CD4-positive, alpha-beta memory T cell (primary cell): ENCODE measurements at regions of chr4 and their contacts with region 1.

Region 1: GRCh38 chr4:87006676-87007527 is 72.1 kb downstream of the AFF1 start:
- DNase-seq: peak; percentile 90 to 95 (median 91)
- H3K4me3 ChIP-seq: peak overlapping the region; percentile 82 to 86
- H3K4me3 Mint-ChIP-seq: peak overlapping the region; percentile 88 to 99 (median 94)
- H3K27ac ChIP-seq: peak overlapping the region; percentile 83
- H3K27ac Mint-ChIP-seq: peak overlapping the region; percentile 91 to 100 (median 97)
- H3K4me1 ChIP-seq: peaks cover 53% of the 10 kb centered on the region
- H3K4me1 Mint-ChIP-seq: peaks cover 47 to 58% (median 53%) of the 10 kb centered on the region in 4 donors
- H3K27me3 ChIP-seq: no peaks in the 10 kb centered on the region
- H3K27me3 Mint-ChIP-seq: no peaks in the 10 kb centered on the region

Region 2: DNA sequence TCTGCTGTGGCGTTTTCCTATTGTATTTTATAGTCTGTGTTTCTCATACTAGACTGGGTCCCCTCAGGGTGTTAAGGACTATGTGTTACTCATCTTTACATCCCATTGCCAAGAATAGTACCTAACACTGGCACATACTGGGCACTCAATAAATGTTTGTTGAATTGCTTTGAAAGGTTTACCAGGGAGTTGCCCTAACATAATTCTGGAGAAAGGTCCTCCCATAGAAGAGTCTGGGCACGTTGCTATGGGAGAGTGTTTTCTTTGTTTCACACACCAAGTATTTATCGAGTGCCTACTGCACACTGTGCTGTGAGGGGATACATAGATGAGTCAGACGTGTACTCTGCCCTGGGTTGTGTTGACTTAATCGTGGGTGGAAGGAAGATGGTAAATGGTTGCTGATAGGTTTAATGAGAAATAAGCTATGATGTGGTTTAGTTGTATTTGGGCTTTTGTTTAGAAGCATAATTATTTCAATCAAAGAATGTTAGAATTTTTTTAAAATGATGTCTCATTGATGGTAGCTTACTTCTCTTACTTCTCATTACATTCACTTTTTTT is 29.2 kb before region 1 on chr4:
- CTCF ChIA-PET with region 1: interaction called, 3 read pairs
- POLR2A ChIA-PET with region 1: interaction called, 16 read pairs
- intact Hi-C with region 1: no loop called
- DNase-seq: peak in 1 of 5 donors; percentile 10
- H3K4me3 ChIP-seq: no peak overlapping the region
- H3K4me3 Mint-ChIP-seq: peak overlapping the region in 3 of 8 donors; percentile 1 to 62 (median 60)
- H3K27ac ChIP-seq: no peak overlapping the region
- H3K27ac Mint-ChIP-seq: peak overlapping the region in 6 of 7 donors; percentile 22 to 83 (median 70)
- H3K4me1 ChIP-seq: peaks cover 57% of the 10 kb centered on the region
- H3K4me1 Mint-ChIP-seq: peaks cover 48 to 85% (median 69%) of the 10 kb centered on the region in 4 donors
- H3K27me3 ChIP-seq: no peaks in the 10 kb centered on the region
- H3K27me3 Mint-ChIP-seq: no peaks in the 10 kb centered on the region

Region 3: GRCh38 chr4:86993909-86994681 is 12.8 kb before region 1 on chr4:
- CTCF ChIA-PET with region 1: interaction called, 4 read pairs
- POLR2A ChIA-PET with region 1: interaction called, 24 read pairs
- intact Hi-C with region 1: no loop called
- DNase-seq: no peak
- H3K4me3 ChIP-seq: no peak overlapping the region
- H3K4me3 Mint-ChIP-seq: no peak overlapping the region
- H3K27ac ChIP-seq: no peak overlapping the region
- H3K27ac Mint-ChIP-seq: peak overlapping the region in 5 of 7 donors; percentile 4 to 65 (median 19)
- H3K4me1 ChIP-seq: peaks cover 5% of the 10 kb centered on the region
- H3K4me1 Mint-ChIP-seq: peaks cover 10 to 40% (median 30%) of the 10 kb centered on the region in 4 donors
- H3K27me3 ChIP-seq: no peaks in the 10 kb centered on the region
- H3K27me3 Mint-ChIP-seq: no peaks in the 10 kb centered on the region

Region 4: DNA sequence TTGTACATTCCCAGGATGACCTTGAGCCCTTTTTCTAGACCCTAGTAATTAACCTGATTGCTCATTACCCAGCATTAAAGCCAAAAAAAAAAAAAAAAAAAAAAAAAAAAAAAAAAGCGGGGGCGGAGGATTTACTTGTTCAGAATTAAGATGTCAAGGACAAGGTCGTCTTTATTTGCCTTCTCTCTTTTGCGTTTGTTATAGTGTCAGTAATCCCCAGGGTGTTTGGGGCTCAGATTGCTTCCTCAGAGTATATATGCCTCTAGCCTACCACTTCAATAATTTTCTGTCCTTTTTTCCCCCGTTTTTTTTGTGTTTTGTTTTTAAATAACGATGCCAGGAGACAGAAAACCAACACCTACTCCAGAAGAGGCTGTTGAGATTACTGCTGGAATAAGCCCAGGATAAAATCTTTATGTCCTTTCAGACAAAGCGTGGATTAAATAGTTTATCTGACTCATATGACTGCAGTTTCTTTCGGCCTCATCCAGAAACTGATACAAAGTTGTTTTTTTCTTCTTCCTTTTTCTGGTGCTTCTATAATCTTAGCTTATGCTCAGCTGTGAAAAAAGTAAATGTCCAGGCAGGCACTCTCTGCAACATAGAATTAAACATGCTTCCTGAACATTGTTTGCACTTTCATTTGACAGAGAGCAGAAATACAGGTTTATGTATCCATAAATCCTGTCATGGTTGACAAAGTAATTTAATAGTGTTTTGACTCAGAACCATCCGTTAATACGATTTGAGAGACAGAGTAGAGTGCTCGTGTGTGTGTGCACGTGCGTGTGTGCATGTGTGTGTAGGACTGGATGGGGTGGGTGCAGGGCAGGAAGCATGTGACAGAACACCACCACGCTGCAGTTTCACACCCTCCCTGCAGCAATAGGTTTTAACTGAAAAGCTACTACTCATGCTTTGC is 66.6 kb after region 1 on chr4:
- CTCF ChIA-PET with region 1: interaction called, 4 read pairs
- POLR2A ChIA-PET with region 1: interaction called, 3 read pairs
- intact Hi-C with region 1: loop called (anchors 5 kb)
- DNase-seq: peak; percentile 37 to 57 (median 45)
- H3K4me3 ChIP-seq: peak overlapping the region in 1 of 2 donors; percentile 41
- H3K4me3 Mint-ChIP-seq: peak overlapping the region; percentile 61 to 83 (median 76)
- H3K27ac ChIP-seq: peak overlapping the region; percentile 21
- H3K27ac Mint-ChIP-seq: peak overlapping the region; percentile 20 to 82 (median 74)
- H3K4me1 ChIP-seq: peaks cover 27% of the 10 kb centered on the region
- H3K4me1 Mint-ChIP-seq: peaks cover 42 to 68% (median 54%) of the 10 kb centered on the region in 4 donors
- H3K27me3 ChIP-seq: no peaks in the 10 kb centered on the region
- H3K27me3 Mint-ChIP-seq: no peaks in the 10 kb centered on the region

Region 5: GRCh38 chr4:87093443-87094123 is 86.7 kb after region 1 on chr4:
- CTCF ChIA-PET with region 1: interaction called, 11 read pairs
- POLR2A ChIA-PET with region 1: interaction called, 8 read pairs
- intact Hi-C with region 1: loop called (anchors 1 kb)
- DNase-seq: peak; percentile 38 to 61 (median 46)
- H3K4me3 ChIP-seq: no peak overlapping the region
- H3K4me3 Mint-ChIP-seq: no peak overlapping the region
- H3K27ac ChIP-seq: no peak overlapping the region
- H3K27ac Mint-ChIP-seq: peak overlapping the region; percentile 33 to 91 (median 82)
- H3K4me1 ChIP-seq: peaks cover 20% of the 10 kb centered on the region
- H3K4me1 Mint-ChIP-seq: peaks cover 17 to 29% (median 24%) of the 10 kb centered on the region in 4 donors
- H3K27me3 ChIP-seq: no peaks in the 10 kb centered on the region
- H3K27me3 Mint-ChIP-seq: no peaks in the 10 kb centered on the region

Region 6: DNA sequence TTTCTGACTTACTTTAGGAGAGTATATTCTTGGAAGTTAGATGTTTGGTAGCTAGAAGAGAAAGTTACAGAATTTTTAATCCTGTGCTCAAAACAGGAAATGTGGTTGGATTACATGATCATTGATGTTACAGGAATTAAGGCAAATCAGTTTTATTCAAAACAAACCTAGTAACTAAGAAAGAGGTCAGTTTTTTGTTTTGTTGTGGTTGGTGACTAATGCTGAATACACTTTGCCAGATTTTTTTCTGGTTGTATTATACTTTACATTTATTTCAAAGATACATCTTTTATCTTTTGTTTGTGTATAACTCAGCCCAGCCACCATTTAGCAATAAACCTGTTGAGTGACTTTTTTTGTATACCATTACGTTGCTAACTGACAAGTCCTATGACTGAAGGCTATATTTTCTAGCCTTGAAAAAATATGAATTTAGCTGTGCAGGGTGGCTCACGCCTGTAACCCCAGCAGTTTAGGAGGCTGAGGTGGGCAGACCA is 96.8 kb after region 1 on chr4:
- CTCF ChIA-PET with region 1: interaction called, 7 read pairs
- POLR2A ChIA-PET with region 1: interaction called, 33 read pairs
- intact Hi-C with region 1: no loop called
- DNase-seq: peak; percentile 51 to 84 (median 80)
- H3K4me3 ChIP-seq: no peak overlapping the region
- H3K4me3 Mint-ChIP-seq: peak overlapping the region; percentile 30 to 82 (median 75)
- H3K27ac ChIP-seq: peak overlapping the region; percentile 51
- H3K27ac Mint-ChIP-seq: peak overlapping the region; percentile 91 to 97 (median 96)
- H3K4me1 ChIP-seq: peaks cover 48% of the 10 kb centered on the region
- H3K4me1 Mint-ChIP-seq: peaks cover 51 to 67% (median 56%) of the 10 kb centered on the region in 4 donors
- H3K27me3 ChIP-seq: no peaks in the 10 kb centered on the region
- H3K27me3 Mint-ChIP-seq: no peaks in the 10 kb centered on the region

Region 7: GRCh38 chr4:87220094-87220822 is 213.4 kb after region 1 on chr4 and contains the start of gene KLHL8:
- CTCF ChIA-PET with region 1: no interaction called
- POLR2A ChIA-PET with region 1: interaction called, 13 read pairs
- intact Hi-C with region 1: loop called (anchors 1 kb)
- DNase-seq: peak; percentile 84 to 91 (median 90)
- H3K4me3 ChIP-seq: peak within 1 kb of the TSS; percentile 82 to 89
- H3K4me3 Mint-ChIP-seq: peak within 1 kb of the TSS; percentile 91 to 98 (median 95)
- H3K27ac ChIP-seq: peak within 1 kb of the TSS; percentile 85
- H3K27ac Mint-ChIP-seq: peak within 1 kb of the TSS; percentile 81 to 96 (median 94)
- H3K4me1 ChIP-seq: peaks cover 16% of the 10 kb centered on the region
- H3K4me1 Mint-ChIP-seq: peaks cover 9 to 23% (median 16%) of the 10 kb centered on the region in 4 donors
- H3K27me3 ChIP-seq: no peaks in the 10 kb centered on the region
- H3K27me3 Mint-ChIP-seq: no peaks in the 10 kb centered on the region
- total RNA-seq, gene KLHL8: 11.0 to 11.4 TPM

Region 8: DNA sequence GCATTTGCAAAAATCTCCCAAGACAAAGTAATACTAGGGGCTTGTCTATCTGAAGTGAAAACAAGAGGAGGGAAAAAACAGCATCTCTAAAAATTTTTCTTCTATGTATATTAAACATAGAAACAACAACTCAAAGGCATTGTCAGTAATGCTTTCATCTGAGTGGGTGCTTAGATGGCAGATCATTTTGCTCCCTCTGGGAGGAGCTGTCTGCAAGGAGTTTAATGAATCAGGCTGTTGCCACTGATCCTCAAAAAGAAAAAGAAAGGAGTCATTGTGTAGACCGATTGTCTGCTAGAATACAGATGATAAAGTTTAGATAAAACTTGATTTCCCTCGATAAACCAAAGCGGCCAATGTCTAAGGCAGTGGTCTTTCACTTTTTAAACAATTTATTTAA is 263.2 kb after region 1 on chr4:
- CTCF ChIA-PET with region 1: no interaction called
- POLR2A ChIA-PET with region 1: no interaction called
- intact Hi-C with region 1: no loop called
- DNase-seq: no peak
- H3K4me3 ChIP-seq: no peak overlapping the region
- H3K4me3 Mint-ChIP-seq: no peak overlapping the region
- H3K27ac ChIP-seq: no peak overlapping the region
- H3K27ac Mint-ChIP-seq: no peak overlapping the region
- H3K4me1 ChIP-seq: no peaks in the 10 kb centered on the region
- H3K4me1 Mint-ChIP-seq: no peaks in the 10 kb centered on the region
- H3K27me3 ChIP-seq: no peaks in the 10 kb centered on the region
- H3K27me3 Mint-ChIP-seq: peaks cover 6 to 11% of the 10 kb centered on the region in 2 donors

Region 9: GRCh38 chr4:87679449-87680169 is 672.7 kb after region 1 on chr4:
- CTCF ChIA-PET with region 1: no interaction called
- POLR2A ChIA-PET with region 1: no interaction called
- intact Hi-C with region 1: no loop called
- DNase-seq: peak in 4 of 5 donors; percentile 0 to 18 (median 3)
- H3K4me3 ChIP-seq: no peak overlapping the region
- H3K4me3 Mint-ChIP-seq: no peak overlapping the region
- H3K27ac ChIP-seq: no peak overlapping the region
- H3K27ac Mint-ChIP-seq: no peak overlapping the region
- H3K4me1 ChIP-seq: no peaks in the 10 kb centered on the region
- H3K4me1 Mint-ChIP-seq: no peaks in the 10 kb centered on the region
- H3K27me3 ChIP-seq: no peaks in the 10 kb centered on the region
- H3K27me3 Mint-ChIP-seq: peaks cover 0 to 3% of the 10 kb centered on the region in 2 donors